OCI-LY7 (cell line): ENCODE measurements at regions of chr11 and their contacts with region 1.

Region 1: DNA sequence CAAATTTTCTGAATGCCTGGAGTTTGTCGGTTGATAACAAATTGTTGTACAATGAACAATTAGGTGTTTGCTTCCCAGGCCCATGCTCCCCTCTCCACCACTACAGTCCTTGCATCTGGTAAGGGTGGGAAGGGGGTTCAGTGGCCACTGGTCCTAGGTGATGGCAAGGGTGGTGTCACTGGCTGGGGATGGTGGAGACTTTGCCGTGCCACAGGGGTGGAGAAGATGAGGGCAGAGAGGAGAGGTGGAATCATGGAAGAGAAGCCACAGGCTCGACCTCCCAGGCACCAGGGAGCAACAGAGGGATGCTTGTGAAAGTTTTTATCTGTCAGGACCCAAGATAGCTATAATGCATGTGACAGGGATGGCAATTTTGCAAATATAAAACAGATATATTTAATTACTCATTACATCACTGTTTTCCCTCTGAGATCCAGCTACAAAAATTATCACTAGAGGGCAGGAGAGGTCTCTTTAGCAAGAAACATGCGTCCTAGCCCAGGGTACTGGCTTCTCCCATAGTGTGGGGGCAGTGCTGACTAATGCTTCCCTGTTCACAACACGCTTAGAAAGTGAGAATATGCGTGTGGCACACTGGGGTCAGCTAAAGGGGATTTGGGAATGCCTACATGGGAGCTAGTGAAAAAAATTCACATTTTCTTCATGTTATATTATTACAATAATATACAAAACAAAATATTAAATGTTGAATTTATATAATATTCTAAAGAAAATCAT is 49.0 kb upstream of the AMPD3 start:
- DNase-seq: peak; percentile 84
- H3K4me3 ChIP-seq: no peak overlapping the region
- H3K27ac ChIP-seq: no peak overlapping the region
- H3K4me1 ChIP-seq: peaks cover 4% of the 10 kb centered on the region
- CTCF ChIP-seq: peak; percentile 93

Region 2: GRCh38 chr11:10478574-10479550 is 72.8 kb after region 1 on chr11:
- CTCF ChIA-PET with region 1: no interaction called
- POLR2A ChIA-PET with region 1: no interaction called
- intact Hi-C with region 1: no loop called
- DNase-seq: no peak
- H3K4me3 ChIP-seq: no peak overlapping the region
- H3K27ac ChIP-seq: no peak overlapping the region
- H3K4me1 ChIP-seq: no peaks in the 10 kb centered on the region
- CTCF ChIP-seq: no peak

Region 3: DNA sequence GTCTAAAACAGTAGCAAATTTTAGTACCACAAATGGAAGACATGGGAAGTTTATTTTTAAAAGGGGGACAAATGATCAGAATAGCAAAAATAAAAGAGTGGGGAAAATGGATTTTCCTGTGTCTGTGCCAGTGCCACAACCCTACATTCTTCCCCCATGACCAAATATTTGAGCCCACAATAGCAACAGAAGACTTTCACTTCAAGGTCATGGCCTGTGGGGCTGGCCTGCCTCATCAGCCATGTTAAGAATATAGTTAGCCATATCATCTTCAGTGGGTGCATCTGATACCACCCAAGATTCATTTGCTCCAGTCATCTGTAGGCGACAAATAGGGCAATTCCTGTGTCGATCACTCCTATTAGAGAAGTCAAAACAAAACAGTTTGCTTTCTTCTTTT is 108.7 kb after region 1 on chr11:
- CTCF ChIA-PET with region 1: no interaction called
- POLR2A ChIA-PET with region 1: no interaction called
- intact Hi-C with region 1: loop called (anchors 5 kb)
- DNase-seq: no peak
- H3K4me3 ChIP-seq: no peak overlapping the region
- H3K27ac ChIP-seq: no peak overlapping the region
- H3K4me1 ChIP-seq: no peaks in the 10 kb centered on the region
- CTCF ChIP-seq: no peak

Region 4: DNA sequence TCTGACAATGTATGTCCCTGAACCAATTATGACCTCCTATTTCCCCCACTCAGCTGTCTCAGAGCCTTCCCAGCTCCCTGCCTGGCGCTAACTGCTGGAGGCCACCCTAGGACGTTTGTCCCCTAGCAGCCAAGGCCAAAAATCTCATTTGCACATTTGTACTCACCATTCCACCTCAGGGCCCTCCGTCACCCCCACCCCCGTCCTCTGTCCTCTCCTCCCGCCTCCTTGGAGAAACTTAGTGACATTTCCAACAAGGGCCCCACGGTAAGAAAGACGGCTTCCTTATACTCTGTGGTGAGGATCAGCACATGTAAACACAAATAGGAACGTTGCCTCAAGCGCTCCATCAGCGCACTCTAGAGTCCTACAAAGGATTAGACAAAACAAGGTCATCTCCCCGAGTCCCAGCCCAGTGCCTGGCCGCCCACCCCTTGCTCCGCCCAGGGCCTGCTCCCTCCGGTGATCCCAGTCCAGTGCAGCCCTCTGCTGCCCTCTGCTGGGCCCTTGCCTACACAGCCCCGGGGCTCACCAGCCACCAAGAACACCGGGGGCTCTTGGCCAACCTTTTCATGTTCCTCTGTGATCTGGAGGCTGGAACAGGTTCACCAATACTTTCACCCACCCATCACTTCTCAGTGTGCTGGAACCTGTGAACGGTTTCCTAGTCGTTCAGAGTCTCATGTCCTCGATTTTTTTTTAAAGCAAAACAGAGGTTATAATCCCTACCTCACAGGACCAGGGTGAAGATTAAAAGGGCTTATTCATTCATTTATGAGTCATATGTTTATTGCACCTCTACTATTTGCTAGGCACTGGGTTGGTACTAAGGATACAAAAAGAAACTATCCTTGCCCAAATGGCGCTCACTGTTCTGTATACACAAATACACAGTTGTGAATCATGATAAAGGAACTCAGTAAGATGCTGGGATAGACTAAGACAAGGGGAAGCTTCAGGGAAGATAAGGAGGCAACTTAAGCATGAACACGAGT is 329.8 kb after region 1 on chr11:
- CTCF ChIA-PET with region 1: no interaction called
- POLR2A ChIA-PET with region 1: interaction called, 3 read pairs
- intact Hi-C with region 1: loop called (anchors 1 kb)
- DNase-seq: peak; percentile 80
- H3K4me3 ChIP-seq: no peak overlapping the region
- H3K27ac ChIP-seq: no peak overlapping the region
- H3K4me1 ChIP-seq: peaks cover 4% of the 10 kb centered on the region
- CTCF ChIP-seq: peak; percentile 92